ENCODE measurements at regions of chr3 and their contacts with region 1.

Region 1: GRCh38 chr3:131361464-131362421 is 19.8 kb upstream of the NUDT16 start:
- H3K4me3 Mint-ChIP-seq: peak overlapping the region; percentile 84
- H3K27ac Mint-ChIP-seq: peak overlapping the region; percentile 99
- H3K4me1 Mint-ChIP-seq: peaks cover 56% of the 10 kb centered on the region
- H3K27me3 Mint-ChIP-seq: no peaks in the 10 kb centered on the region

Region 2: DNA sequence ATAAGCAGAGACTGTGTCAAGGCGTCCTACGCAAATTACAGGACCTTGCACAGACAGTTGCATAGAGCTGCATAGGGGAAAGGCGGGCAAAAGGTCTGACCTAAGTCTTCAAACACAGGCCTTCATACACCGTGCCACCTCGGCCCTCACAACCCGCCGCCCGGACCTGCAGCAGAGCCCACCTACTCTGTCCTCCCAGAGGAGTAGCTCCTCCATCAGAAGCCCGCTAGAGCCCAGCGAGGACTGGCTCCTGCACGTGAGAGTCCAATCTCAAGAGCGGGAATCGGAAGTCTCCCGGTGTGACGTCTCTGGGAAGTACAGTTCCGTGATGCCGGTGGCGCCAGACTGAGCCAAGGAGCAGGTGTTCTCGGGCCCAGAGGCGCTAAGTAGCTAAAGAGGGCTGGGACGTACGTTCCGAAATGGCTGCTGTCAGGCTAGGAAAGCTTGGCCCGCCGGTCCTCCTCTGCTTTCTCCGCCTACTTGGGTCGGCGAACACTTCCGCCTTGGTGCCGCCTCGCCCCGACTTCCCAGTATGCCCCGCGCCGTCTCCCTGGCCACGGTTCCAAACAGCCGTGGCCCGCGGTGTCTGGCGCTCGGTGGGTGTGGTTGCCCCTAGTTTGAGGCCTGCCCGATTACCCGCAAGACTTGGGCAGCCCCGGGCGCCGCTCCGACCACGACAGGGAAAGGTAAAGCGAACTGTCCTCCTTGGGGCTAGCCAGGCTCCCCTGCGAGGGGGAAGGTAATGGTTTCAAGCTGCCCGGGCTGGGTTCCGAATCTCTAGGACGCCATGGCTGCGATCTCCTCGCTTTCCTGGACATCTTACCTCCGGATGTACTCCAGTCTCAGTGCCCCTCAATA is 335.2 kb before region 1 on chr3 and contains the starts of genes ASTE1 and NEK11:
- intact Hi-C with region 1: loop called (anchors 10 kb)
- H3K4me3 Mint-ChIP-seq: peak within 1 kb of the TSS; percentile 86
- H3K27ac Mint-ChIP-seq: peak within 1 kb of the TSS; percentile 96
- H3K4me1 Mint-ChIP-seq: peaks cover 41% of the 10 kb centered on the region
- H3K27me3 Mint-ChIP-seq: no peaks in the 10 kb centered on the region

Region 3: GRCh38 chr3:131381444-131382291 is 19.9 kb after region 1 on chr3 and contains the start of gene NUDT16:
- intact Hi-C with region 1: loop called (anchors 1 kb)
- H3K4me3 Mint-ChIP-seq: peak within 1 kb of the TSS; percentile 86
- H3K27ac Mint-ChIP-seq: peak within 1 kb of the TSS; percentile 96
- H3K4me1 Mint-ChIP-seq: peaks cover 74% of the 10 kb centered on the region
- H3K27me3 Mint-ChIP-seq: no peaks in the 10 kb centered on the region

Region 4: DNA sequence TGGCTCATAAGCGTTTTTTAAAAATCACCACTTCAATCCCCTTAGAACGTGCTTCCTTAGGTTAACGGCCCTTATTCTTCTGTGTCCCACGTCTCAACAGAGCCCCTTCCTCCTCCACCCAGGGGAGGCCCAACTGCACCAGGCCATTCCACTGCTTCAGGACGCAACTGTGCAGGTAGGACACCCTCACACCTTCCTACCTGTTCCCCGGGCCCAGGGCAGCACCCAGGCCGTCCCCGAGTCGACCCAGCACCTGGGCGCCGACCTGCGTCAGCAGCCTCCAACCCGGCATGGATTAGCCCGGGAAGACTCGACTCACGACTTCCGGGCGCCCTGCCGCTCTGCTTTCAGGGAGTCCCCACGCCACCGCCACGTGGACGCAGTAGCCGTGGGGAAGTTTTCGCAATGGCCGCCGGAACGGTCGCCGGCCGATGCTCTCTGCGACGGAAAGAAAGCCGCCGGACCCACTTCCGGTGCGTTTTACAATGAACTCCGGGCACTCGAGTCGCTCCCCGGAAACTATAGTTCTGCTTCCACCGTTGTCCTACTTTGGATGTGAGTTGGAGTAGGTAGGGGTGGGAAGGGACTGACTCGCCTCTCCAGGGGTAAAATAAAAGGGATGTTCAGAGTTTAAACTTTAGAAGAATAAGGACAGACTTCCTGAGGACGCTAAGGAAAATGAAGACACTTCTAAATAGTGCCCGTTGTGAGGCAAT is 140.9 kb after region 1 on chr3 and contains the start of gene MRPL3:
- intact Hi-C with region 1: loop called (anchors 2 kb)
- H3K4me3 Mint-ChIP-seq: peak within 1 kb of the TSS; percentile 100
- H3K27ac Mint-ChIP-seq: peak within 1 kb of the TSS; percentile 99
- H3K4me1 Mint-ChIP-seq: peaks cover 39% of the 10 kb centered on the region
- H3K27me3 Mint-ChIP-seq: no peaks in the 10 kb centered on the region

Region 5: DNA sequence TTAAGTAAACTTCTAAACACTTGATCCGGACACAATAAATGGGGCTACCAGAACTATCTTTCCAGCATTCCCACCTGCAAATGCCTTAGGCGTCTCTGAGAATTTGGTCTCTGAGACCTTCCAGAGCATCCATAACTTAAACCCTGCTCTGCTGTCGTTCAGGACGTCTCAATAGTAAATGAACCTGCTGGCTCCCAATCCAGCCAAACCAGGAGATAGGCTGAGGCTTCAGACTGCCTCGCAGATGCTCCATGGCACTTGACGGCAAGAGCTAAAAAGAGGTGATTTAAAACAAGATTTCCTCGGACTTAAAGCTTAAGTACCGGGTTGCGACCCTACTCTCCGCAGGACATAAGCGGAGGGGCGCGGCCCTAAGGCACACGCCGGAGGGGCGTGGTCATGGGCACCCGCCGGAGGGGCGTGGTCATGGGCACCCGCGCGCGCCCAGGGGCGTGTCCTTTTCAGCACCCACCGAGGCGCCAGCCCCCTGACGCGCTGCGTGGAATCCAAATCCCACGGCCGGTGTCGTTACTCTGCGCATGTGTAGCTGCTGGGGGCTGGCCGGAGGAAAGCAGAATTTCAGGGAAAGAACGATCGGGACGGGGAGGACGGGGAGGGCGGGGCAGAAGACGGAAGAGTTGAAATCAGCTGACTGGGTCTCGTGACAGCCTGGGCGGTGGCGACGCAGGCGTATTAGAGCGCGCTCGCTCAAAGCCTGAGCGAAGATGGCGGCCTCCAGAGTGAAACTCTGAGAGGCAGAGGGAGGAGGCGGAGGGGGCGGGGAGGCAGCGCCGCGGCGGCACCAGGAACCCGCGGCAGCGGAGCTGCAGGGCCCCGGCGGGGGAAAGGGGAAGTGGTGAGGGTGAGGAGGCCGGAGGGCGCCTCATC is 1055.3 kb after region 1 on chr3 and contains the start of gene DNAJC13:
- intact Hi-C with region 1: loop called (anchors 5 kb)
- H3K4me3 Mint-ChIP-seq: peak within 1 kb of the TSS; percentile 98
- H3K27ac Mint-ChIP-seq: peak within 1 kb of the TSS; percentile 92
- H3K4me1 Mint-ChIP-seq: peaks cover 14% of the 10 kb centered on the region
- H3K27me3 Mint-ChIP-seq: no peaks in the 10 kb centered on the region

Measured in dendritic cell treated with granulocyte-macrophage colony-stimulating factor and Interleukin-4, amounts not matched to agents 40 ng/mL and 50 ng/mL, for 4 days (primary cell).